Psoas muscle (tissue), 8 donors: ENCODE measurements at regions of chr17 and their contacts with region 1.

Region 1: DNA sequence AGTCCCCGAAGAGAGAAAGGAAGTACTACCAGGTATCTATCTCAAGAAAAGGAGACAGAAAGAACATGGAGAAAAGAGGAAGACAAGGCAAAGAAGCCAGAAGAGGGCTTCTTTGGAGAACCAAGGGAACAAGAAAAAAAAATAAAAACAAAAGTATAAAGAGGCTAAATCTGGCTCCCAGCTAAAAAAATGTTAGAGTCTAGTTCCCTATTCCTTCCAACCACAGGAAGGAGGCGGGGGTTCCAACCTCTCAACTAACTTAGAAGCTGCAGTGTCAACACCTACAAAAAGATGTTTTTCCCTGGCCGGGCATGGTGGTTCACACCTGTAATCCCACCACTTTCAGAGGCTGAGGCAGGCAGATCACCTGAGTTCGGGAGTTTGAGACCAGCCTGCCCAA is 13.4 kb downstream of the UTP6 start:
- DNase-seq: no peak
- ATAC-seq: no peak
- H3K4me3 ChIP-seq: no peak overlapping the region
- H3K27ac ChIP-seq: no peak overlapping the region
- H3K4me1 ChIP-seq: no peaks in the 10 kb centered on the region
- H3K27me3 ChIP-seq: no peaks in the 10 kb centered on the region
- CTCF ChIP-seq: no peak

Region 2: GRCh38 chr17:31997005-31997404 is 108.9 kb after region 1 on chr17:
- intact Hi-C with region 1: loop called (anchors 10 kb)
- DNase-seq: no peak
- ATAC-seq: no peak
- H3K4me3 ChIP-seq: no peak overlapping the region
- H3K27ac ChIP-seq: no peak overlapping the region
- H3K4me1 ChIP-seq: no peaks in the 10 kb centered on the region
- H3K27me3 ChIP-seq: no peaks in the 10 kb centered on the region
- CTCF ChIP-seq: no peak

Region 3: GRCh38 chr17:32370426-32370825 is 482.3 kb after region 1 on chr17:
- intact Hi-C with region 1: loop called in 1 of 2 experiments (anchors 10 kb)
- DNase-seq: no peak
- ATAC-seq: no peak
- H3K4me3 ChIP-seq: no peak overlapping the region
- H3K27ac ChIP-seq: no peak overlapping the region
- H3K4me1 ChIP-seq: no peaks in the 10 kb centered on the region
- H3K27me3 ChIP-seq: no peaks in the 10 kb centered on the region
- CTCF ChIP-seq: no peak